Motor neuron (in vitro differentiated cells): ENCODE measurements at regions of chr5 and their contacts with region 1.

Region 1: GRCh38 chr5:71633255-71634155 is 46.4 kb downstream of the MCCC2 start:
- ATAC-seq: no peak
- H3K4me3 ChIP-seq: no peak overlapping the region
- H3K27ac ChIP-seq: no peak overlapping the region
- H3K4me1 ChIP-seq: no peaks in the 10 kb centered on the region

Region 2: DNA sequence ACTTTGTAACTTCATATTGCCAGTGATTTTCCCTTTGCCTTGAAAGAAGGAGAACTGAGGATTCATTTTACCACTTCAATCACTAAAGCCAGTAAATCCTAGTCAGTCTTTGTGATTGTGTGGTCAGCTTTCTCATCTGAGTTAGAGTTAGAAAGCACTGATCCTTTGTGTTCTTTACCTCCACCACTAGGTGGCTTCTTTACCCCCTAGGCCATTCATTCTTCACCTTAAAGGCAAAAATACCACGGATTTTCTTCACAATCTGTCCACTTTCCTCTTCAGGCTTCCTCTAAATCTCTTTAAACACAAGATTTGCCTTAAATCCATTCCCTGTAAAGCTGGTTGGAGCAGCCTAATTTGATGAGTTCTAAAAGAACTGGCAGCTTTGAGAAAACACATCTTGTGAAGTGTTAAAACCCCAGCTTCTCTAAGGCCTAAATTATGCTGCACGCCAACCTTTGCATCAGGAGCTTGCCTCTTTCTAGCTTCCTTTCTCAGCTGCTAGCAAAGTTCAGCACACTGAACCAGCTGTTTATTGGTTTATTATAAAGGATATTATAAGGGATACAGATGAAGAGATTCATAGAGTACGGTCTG is 157.6 kb before region 1 on chr5:
- in situ Hi-C with region 1: loop called in 1 of 9 experiments (anchors 25 kb)
- ATAC-seq: peak in 3 of 8 experiments; percentile 39 to 62 (median 45)
- H3K4me3 ChIP-seq: no peak overlapping the region
- H3K27ac ChIP-seq: no peak overlapping the region
- H3K4me1 ChIP-seq: no peaks in the 10 kb centered on the region

Region 3: DNA sequence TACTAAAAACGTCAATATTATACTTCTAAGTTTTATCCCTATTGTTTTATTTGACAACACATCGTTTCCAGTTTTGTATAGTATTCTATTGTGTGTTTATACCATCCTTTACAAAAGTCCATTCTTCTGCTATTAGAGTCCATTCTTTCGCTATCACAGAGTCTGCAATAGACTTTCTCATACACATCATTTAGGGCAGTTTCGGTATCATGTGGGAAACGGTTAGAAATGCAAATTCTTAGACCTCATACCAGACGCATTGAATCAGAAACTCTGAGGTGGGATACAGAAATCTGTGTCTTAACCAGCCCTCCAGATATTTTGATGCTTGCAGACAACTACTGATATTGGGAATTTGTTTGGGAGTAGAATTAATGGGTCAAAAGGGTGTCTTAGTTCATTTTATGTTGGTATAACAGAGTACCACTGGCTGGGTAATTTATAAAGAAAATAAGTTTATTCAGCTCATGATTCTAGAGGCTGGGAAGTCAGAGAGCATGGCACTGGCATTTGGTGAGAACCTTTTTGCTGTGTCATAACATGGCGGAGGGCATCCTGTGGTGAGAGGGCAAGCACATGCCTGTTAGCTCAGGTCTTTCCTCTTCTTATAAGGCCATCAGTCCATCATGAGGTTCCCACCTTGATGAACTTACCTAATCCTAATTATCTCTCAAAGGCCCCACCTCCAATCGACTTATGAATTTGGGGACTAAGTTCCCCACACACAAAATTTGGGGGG is 106.7 kb after region 1 on chr5:
- in situ Hi-C with region 1: loop called in 1 of 9 experiments (anchors 25 kb)
- ATAC-seq: no peak
- H3K4me3 ChIP-seq: no peak overlapping the region
- H3K27ac ChIP-seq: no peak overlapping the region
- H3K4me1 ChIP-seq: peaks cover 0 to 10% of the 10 kb centered on the region in 2 donors